ENCODE measurements at regions of chr6 and their contacts with region 1.

Region 1: DNA sequence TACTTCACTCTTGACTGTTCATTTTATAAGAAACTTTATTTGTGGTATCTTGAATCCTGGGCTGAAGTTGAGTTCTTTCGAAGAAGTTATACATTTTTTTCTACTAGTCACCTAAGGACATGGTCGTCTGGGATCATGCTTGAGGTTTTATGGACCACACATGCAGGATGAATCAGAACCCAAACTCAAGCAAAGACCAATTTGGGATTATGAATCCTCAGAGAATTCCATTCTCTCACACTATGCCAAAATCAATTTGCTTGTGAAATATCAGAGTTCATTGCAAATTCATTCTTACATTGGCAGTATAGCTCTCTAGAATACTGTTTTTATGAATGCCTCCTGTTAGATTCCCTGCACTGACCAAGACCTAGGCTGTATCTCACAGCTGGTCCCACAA is 114.3 kb upstream of the HDAC2 start:
- H3K4me3 ChIP-seq: no peak overlapping the region
- H3K27ac ChIP-seq: no peak overlapping the region
- H3K4me1 ChIP-seq: no peaks in the 10 kb centered on the region
- CTCF ChIP-seq: no peak

Region 2: GRCh38 chr6:113522376-113522775 is 562.8 kb before region 1 on chr6:
- CTCF ChIA-PET with region 1: no interaction called
- POLR2A ChIA-PET with region 1: no interaction called
- H3K4me3 ChIP-seq: no peak overlapping the region
- H3K27ac ChIP-seq: no peak overlapping the region
- H3K4me1 ChIP-seq: no peaks in the 10 kb centered on the region
- CTCF ChIP-seq: no peak

Region 3: DNA sequence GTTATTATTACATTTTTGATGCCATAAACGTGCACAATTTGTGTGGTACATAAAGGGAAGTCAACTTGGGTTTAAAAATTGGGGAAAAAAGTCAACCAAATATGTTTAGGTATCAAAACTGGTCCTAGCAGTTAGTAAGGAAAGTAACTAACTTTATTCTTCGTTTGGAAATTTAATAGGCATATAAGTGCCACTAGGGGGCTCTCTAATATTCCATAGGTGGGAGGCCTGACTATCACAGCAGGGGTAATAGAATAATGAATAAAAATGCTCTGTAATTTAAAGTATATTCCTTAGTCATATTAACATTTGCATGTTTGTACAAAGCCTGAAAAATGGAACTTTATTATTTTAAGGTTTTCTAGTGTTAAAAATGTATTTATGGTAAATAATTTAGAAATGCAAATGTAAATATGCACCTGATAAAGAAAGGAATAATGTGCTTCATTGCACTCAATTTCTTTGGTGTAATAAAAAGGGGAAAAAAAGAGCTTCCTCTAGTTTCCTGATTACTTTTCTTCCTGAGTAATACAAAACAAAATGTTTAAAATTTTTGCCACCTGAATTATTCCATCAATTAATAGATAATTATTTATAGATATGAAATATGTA is 11.5 kb after region 1 on chr6:
- CTCF ChIA-PET with region 1: interaction called, 16 read pairs
- POLR2A ChIA-PET with region 1: no interaction called
- H3K4me3 ChIP-seq: no peak overlapping the region
- H3K27ac ChIP-seq: no peak overlapping the region
- H3K4me1 ChIP-seq: no peaks in the 10 kb centered on the region
- CTCF ChIP-seq: no peak